ENCODE measurements at regions of chr4 and their contacts with region 1.

Region 1: GRCh38 chr4:88217920-88218319 is 59.5 kb upstream of the ABCG2 start:
- DNase-seq: no peak
- ATAC-seq: no peak
- H3K4me3 ChIP-seq: no peak overlapping the region
- H3K4me3 Mint-ChIP-seq: no peak overlapping the region
- H3K27ac ChIP-seq: no peak overlapping the region
- H3K27ac Mint-ChIP-seq: no peak overlapping the region
- H3K4me1 ChIP-seq: no peaks in the 10 kb centered on the region
- H3K4me1 Mint-ChIP-seq: peaks cover 3 to 10% (median 6%) of the 10 kb centered on the region in 3 donors
- H3K27me3 ChIP-seq: no peaks in the 10 kb centered on the region
- H3K27me3 Mint-ChIP-seq: peaks cover 0 to 2% of the 10 kb centered on the region in 2 donors

Region 2: DNA sequence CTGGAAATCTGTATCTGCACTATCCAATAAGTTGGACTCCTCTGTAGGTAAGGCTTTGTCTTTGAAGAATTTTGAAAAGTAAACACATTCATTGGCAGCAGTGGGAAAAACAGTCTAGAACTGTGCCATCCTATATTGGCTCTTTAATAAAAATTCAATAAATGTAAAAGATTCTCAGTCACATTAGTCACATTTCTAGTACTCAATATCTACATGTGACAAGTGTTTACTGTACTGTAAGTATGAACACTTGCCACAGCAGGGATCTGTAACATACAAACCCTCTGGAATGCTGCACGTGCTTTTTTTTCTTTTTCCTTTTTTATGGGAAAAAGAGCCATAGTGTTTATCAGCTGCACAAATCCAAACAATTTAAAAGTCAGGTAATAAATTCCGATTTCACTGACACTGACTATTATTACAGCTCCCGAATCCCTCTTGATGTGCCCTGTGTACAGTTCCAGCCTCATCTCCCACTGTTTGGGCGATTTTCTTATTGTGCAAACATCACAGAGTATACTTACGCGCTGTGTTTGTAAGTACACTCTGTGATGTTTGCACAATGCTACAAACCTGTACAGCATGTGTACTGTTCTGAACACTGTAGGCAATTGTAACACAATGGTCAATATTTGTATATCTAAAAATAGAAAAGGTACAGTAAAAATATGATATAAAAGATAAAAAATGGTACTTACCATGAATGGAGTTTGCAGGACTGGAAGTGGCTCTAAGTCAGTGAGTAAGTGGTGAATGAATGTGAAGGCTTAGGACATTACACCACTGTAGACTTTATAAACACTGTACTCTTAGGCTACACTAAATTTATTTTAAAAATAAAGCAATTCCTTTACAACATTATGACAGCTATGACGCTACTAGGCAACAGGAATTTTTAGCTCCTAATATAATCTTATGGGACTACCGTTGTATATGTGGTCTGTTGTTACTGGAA is 296.9 kb after region 1 on chr4:
- CTCF ChIA-PET with region 1: interaction called, 32 to 110 read pairs
- POLR2A ChIA-PET with region 1: interaction called in 1 of 2 experiments, 3 read pairs
- DNase-seq: no peak
- ATAC-seq: no peak
- H3K4me3 ChIP-seq: no peak overlapping the region
- H3K4me3 Mint-ChIP-seq: no peak overlapping the region
- H3K27ac ChIP-seq: no peak overlapping the region
- H3K27ac Mint-ChIP-seq: no peak overlapping the region
- H3K4me1 ChIP-seq: no peaks in the 10 kb centered on the region
- H3K4me1 Mint-ChIP-seq: no peaks in the 10 kb centered on the region
- H3K27me3 ChIP-seq: no peaks in the 10 kb centered on the region
- H3K27me3 Mint-ChIP-seq: no peaks in the 10 kb centered on the region